A673 (cell line): ENCODE measurements at regions of chr5 and their contacts with region 1.

Region 1: DNA sequence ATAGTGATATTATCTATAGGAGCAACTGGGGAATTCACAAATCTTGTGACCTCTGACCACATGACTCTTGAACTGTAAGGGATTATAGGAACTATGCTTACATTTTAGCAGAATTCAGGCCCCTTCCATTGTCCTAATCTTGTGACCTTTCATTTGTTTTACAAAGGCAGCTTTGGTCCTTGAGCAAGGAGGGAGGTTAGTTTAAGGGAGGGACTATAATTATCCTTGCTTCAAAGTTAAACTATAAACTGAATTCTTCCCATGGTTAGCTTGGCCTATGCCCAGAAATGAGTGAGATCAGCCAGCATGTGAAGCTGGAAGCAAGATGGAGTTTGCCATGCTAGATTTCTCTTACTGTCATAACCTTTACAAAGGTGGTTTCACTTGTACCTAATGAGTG is 51.2 kb downstream of the TARS1 start:
- DNase-seq: peak; percentile 22
- H3K4me3 ChIP-seq: no peak overlapping the region
- H3K27ac ChIP-seq: no peak overlapping the region
- H3K4me1 ChIP-seq: peaks cover 48% of the 10 kb centered on the region
- H3K27me3 ChIP-seq: no peaks in the 10 kb centered on the region
- CTCF ChIP-seq: no peak

Region 2: DNA sequence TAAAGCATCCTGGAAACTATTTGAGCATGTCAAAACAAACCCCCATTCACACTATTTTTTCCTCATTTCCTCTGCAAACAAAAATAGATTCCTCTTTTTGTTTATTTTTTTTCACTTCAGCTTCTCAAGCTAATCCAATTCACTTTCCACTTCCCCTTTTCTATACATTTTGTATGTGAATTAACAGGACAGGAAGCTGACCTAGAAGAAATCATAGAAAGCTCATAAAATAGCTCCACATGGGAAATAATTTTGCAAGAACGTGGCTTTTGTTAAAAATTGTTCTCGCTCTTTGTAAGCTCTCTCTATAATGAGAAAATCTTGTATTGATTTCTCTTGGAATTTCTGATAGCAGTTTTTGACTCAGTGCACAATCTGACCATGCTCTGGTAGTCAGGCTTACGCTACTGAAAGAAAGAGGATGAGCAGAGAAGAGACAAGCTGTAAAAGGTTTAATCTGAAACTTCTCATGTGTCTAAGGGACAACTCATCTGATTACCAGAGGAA is 184.1 kb after region 1 on chr5:
- CTCF ChIA-PET with region 1: no interaction called
- POLR2A ChIA-PET with region 1: no interaction called
- intact Hi-C with region 1: loop called (anchors 5 kb)
- DNase-seq: peak; percentile 87
- H3K4me3 ChIP-seq: no peak overlapping the region
- H3K27ac ChIP-seq: peak overlapping the region; percentile 81
- H3K4me1 ChIP-seq: peaks cover 29% of the 10 kb centered on the region
- H3K27me3 ChIP-seq: no peaks in the 10 kb centered on the region
- CTCF ChIP-seq: no peak